ENCODE measurements at regions of chr10 and their contacts with region 1.

Region 1: GRCh38 chr10:48656241-48656913 is 28.3 kb upstream of the WDFY4 start:
- DNase-seq: peak; percentile 96
- ATAC-seq: peak; percentile 95

Region 2: GRCh38 chr10:48551861-48552591 is 104.4 kb before region 1 on chr10:
- intact Hi-C with region 1: loop called (anchors 1 kb)
- DNase-seq: no peak
- ATAC-seq: peak; percentile 55

Region 3: DNA sequence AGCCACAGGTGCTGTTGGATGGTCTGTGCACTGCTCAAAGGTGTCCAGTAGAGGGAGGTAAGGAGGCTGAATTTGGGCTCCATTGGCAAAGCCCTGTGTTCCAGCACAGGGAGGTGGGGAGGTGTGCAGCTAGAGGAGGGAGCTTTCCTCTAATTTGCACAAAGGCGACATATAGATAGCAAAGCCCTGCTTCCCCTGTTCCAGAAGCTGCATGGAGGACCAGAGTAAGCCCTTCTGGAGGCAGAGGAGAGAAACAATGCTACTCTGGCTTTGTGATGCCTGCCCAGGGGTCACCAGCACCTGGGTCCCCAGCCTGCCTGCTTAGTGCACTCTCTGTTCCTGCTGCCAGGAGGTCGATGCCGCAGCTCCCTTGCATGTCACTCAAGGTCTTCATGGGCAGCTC is 48.1 kb before region 1 on chr10:
- intact Hi-C with region 1: loop called (anchors 2 kb)
- DNase-seq: no peak
- ATAC-seq: no peak

Region 4: DNA sequence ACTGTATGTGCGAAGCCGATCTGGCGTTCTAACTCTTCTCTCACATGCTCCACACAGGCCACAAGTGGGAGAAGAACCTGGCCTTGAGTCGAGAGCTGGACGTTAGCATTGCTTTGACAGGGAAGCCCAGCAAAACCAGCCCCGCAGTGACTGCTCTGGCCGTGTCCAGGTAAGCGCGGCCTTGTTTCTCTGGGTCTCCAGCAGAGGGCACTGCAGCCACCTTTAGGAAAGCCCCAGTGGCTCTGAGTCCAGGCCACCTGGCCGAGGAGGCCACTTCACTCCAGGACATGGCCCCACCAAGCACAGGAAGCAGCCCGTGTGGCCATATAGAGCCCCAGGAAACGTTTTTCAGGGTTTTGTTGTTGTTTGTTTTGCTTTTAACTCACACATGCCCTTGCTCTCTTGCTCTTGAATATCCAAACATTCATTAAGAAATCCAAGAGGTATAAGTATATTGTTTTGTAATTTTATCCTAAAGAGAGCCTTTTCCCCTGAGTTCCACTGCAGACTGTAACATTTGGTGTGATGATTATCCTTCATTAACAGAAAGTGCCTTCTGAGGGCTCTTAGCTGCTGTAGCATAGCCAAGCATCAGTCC is 325.0 kb after region 1 on chr10:
- intact Hi-C with region 1: loop called (anchors 5 kb)
- DNase-seq: no peak
- ATAC-seq: peak; percentile 86

Region 5: DNA sequence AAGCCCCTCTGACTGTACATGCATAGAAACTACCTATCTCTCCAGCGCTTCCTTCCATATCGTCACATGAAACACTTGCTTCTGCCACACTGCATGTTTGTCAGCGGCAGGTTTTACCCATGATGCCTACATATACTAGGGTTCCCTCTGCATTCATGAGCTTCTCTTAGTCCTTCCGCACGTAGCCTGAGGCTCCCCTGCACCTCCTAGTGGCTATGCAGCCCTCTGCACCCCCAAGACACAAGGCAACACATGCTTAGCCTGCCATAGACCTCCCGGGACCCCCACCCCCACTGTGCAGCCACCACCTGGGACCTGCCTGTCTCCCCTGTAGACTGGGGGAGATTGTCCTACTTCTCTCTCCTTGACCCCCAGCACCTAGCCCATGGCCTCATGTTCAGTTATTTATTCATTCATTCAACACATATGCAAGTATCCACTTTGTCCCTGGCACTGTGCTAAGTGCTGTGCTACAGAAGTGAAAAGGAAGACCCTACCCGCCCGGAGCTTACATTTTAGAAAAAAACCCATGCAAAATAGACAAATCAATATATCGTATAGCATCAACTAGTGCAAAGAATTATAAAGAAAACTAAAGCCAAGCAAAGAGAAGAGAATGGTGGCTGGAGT is 508.3 kb after region 1 on chr10:
- intact Hi-C with region 1: loop called (anchors 5 kb)
- DNase-seq: no peak
- ATAC-seq: peak; percentile 49

Region 6: GRCh38 chr10:49518982-49519578 is 862.7 kb after region 1 on chr10:
- intact Hi-C with region 1: loop called (anchors 5 kb)
- DNase-seq: no peak
- ATAC-seq: peak; percentile 58